Right cardiac atrium (tissue), 5 donors: ENCODE measurements at regions of chr2 and their contacts with region 1.

Region 1: DNA sequence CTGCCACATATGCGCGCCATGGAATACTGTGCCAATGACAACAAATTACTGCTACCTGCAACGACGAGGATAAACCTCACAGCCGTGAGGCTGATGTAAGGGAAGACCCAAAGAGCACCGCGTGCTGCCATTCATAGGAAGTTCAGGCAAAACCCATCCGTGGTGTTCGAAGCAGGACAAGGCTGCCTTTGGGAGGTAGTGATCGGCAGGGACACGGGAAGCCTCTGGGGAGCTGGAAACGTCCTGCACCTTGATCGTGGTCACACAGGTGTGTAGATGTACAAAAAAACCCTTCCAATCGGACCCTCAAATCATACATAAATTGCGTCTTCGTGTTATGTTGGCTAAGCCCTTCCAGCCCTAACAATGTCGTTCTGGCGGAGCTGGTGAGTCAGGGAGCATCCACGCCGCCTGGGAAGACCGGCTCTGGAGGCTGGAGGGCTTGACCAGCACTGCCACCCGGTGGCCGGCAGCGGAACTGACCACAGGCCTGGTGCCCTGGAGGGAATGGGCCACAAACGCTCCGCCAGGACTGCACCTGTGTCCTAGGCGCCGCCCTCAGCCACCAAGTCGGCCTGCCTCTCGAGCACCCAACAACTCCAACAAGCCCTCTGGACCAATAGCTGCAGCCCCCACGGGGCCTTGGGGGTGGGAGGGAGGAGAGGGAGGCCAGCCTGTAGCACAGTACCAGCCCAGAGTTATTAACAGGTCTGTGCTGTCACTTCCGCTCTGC is 4.1 kb upstream of the NEURL3 start:
- DNase-seq: peak; percentile 90 to 96 (median 95)
- ATAC-seq: peak; percentile 88 to 89
- H3K4me3 ChIP-seq: no peak overlapping the region
- H3K27ac ChIP-seq: no peak overlapping the region
- H3K4me1 ChIP-seq: no peaks in the 10 kb centered on the region
- H3K27me3 ChIP-seq: no peaks in the 10 kb centered on the region

Region 2: GRCh38 chr2:96099861-96100798 is 409.1 kb before region 1 on chr2:
- intact Hi-C with region 1: no loop called
- DNase-seq: no peak
- ATAC-seq: no peak
- H3K4me3 ChIP-seq: no peak overlapping the region
- H3K27ac ChIP-seq: no peak overlapping the region
- H3K4me1 ChIP-seq: peaks cover 6% of the 10 kb centered on the region
- H3K27me3 ChIP-seq: no peaks in the 10 kb centered on the region

Region 3: DNA sequence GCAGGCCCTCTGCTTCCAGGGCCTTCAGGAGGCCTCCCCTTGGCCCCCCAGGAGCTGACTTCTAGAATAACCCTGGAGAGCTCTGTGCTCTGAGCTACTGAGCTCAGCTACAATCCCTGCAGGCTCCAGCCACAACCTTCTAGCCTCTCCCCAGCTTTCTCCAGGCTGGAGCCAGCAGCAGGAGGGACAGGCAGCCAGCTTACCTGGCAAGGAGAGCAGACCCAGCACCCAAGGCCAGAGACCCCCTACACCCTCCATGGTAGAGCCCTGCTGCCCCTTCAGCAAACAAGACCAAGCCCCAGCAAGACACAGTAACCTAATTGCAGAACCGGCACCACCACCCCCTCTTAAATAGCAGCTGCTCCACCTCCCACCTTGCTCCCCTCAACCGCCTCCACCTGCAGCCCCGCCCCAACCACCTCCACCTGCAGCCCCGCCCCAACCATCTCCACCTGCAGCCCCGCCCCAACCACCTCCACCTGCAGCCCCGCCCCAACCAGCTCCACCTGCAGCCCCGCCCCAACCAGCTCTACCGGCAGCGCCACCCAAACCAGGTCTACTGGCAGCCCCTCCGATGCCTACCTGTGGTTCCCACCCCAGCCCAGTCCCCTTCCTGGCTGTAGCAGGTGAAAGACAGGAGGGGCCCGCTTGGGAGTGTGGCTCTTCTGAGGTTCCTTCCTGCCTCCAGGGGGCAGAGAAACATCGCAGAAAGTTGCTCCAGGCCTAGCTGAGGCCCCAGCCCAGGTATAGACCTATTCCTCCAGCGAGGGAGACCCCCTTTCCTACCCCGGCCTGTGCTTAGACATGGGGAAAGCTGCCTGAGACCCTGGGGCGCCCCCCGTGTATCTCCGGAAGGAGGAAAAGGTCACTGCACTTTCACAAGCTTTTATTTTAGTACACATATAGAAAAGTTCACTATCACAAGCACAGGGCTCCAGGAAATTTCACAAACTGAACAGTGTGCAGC is 370.8 kb before region 1 on chr2 and contains the start of gene ASTL:
- intact Hi-C with region 1: loop called in 2 of 4 experiments (anchors 5 to 10 kb)
- DNase-seq: peak in 2 of 3 donors; percentile 61 to 63
- ATAC-seq: peak; percentile 44 to 63
- H3K4me3 ChIP-seq: no peak within 1 kb of the TSS
- H3K27ac ChIP-seq: no peak within 1 kb of the TSS
- H3K4me1 ChIP-seq: no peaks in the 10 kb centered on the region
- H3K27me3 ChIP-seq: no peaks in the 10 kb centered on the region
- total RNA-seq, gene ASTL: not detected

Region 4: DNA sequence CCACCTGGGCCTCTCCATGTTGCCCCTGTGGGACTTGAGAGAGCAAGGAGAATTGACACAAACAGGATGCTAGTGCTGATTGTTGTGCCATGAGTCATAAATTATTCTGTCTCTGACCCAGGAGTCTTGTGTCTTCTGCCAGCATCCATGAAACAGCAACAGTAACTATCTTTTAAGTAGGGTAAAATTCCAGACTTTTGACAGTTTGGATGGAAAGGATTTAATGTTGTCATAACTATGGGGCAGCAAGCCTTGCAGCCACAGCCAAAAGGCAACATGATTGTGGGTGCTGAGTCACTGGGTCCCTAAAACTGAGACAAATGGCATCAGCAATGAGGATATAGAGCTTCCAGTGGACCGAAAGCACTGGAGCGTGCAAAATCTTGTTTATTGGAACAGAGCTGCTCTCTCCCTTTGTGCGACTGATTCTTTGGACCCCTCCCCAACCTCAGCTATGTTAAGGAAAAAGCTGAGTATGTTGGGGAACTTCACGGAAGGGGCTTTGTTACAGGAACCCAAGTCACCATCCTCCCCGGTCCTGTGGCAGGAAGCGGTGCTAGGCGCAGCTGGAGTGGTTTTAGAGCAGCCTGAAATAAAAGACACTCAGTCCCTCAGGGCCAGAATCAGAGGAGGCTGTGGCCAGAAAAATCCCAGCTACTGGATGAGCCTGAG is 193.7 kb before region 1 on chr2:
- intact Hi-C with region 1: loop called in 1 of 4 experiments (anchors 10 kb)
- DNase-seq: no peak
- ATAC-seq: no peak
- H3K4me3 ChIP-seq: no peak overlapping the region
- H3K27ac ChIP-seq: no peak overlapping the region
- H3K4me1 ChIP-seq: no peaks in the 10 kb centered on the region
- H3K27me3 ChIP-seq: no peaks in the 10 kb centered on the region

Region 5: DNA sequence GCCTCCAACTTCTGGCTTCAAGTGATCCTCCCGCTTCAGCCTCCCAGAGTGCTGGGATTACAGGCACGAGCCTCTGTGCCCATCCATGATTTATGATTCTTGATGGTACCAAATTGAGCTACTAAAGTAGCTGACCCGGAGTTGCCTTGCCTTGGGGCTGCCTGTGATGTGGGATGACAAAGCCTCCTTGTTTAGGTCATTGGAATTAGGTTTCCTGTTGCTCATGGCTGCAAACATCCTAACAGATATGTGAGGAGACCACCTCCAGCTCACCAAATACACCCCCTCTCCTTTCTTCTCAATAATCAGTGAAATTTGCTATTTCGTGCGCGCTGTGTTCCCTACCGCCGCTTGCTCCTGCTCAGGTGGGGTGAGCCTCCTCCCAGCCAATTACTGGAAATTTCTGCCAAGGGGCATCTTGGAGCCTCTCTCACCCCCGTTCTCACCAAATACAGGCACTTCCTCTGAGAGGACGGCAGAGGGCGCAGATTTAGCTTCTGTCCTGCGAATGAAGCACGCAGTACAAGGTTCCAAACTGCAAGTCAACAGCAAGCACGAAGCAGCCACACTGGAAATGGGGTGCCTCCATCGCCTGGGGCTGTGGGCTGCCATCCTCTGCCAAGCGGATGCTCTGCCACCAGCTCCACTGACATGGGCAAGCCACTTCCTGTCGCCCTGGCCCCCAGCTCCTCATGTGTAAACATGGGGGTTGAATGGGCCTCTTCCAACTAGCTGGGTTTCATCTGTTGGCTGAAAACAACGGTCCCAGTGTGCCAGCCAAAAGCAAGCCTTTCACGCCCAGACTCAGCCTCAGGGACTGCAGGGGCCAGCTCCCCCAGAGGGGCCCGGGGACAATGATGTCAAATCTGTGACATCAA is 102.0 kb before region 1 on chr2:
- intact Hi-C with region 1: loop called (anchors 1 to 5 kb)
- DNase-seq: peak; percentile 71 to 83 (median 79)
- ATAC-seq: peak; percentile 62 to 65
- H3K4me3 ChIP-seq: no peak overlapping the region
- H3K27ac ChIP-seq: peak overlapping the region; percentile 11
- H3K4me1 ChIP-seq: peaks cover 9% of the 10 kb centered on the region
- H3K27me3 ChIP-seq: no peaks in the 10 kb centered on the region

Region 6: GRCh38 chr2:96470636-96471035 is 38.6 kb before region 1 on chr2:
- intact Hi-C with region 1: loop called in 1 of 4 experiments (anchors 5 kb)
- DNase-seq: peak; percentile 71 to 91 (median 88)
- ATAC-seq: peak; percentile 92 to 94
- H3K4me3 ChIP-seq: peak overlapping the region; percentile 6
- H3K27ac ChIP-seq: no peak overlapping the region
- H3K4me1 ChIP-seq: no peaks in the 10 kb centered on the region
- H3K27me3 ChIP-seq: no peaks in the 10 kb centered on the region